ENCODE measurements at regions of chr19 and their contacts with region 1.

Region 1: GRCh38 chr19:46016426-46017094 is 6.3 kb downstream of the PGLYRP1 start:
- DNase-seq: peak; percentile 59 to 90 (median 83)
- ATAC-seq: peak; percentile 77
- H3K4me3 ChIP-seq: peak overlapping the region; percentile 93
- H3K4me3 Mint-ChIP-seq: peak overlapping the region; percentile 87
- H3K27ac ChIP-seq: peak overlapping the region; percentile 0 to 25
- H3K27ac Mint-ChIP-seq: peak overlapping the region; percentile 28
- H3K4me1 ChIP-seq: peaks cover 12% of the 10 kb centered on the region
- H3K4me1 Mint-ChIP-seq: peaks cover 17% of the 10 kb centered on the region
- H3K27me3 ChIP-seq: peaks cover 0 to 3% of the 10 kb centered on the region in 2 experiments
- H3K27me3 Mint-ChIP-seq: peaks cover 11% of the 10 kb centered on the region
- CTCF ChIP-seq: peak; percentile 84

Region 2: DNA sequence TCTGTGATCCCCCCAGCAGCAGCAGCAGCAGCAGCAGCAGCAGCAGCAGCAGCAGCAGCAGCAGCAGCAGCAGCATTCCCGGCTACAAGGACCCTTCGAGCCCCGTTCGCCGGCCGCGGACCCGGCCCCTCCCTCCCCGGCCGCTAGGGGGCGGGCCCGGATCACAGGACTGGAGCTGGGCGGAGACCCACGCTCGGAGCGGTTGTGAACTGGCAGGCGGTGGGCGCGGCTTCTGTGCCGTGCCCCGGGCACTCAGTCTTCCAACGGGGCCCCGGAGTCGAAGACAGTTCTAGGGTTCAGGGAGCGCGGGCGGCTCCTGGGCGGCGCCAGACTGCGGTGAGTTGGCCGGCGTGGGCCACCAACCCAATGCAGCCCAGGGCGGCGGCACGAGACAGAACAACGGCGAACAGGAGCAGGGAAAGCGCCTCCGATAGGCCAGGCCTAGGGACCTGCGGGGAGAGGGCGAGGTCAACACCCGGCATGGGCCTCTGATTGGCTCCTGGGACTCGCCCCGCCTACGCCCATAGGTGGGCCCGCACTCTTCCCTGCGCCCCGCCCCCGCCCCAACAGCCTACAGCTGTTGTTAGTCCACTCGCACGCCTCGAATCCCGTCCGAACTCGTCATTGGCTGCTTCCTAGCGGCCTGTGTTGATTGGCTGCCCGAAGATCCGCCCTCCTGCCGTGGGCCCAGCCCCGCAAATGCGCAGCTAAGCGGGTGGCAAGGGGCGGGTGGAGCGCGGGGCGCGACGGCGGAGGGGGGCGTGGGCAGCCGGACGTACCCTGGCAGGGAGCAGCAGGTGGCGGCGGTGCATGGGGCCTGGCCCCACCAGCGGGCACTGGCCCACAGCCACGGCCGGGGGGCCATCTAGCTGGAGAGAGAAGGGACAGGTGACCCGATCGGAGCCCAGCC is 246.1 kb before region 1 on chr19:
- CTCF ChIA-PET with region 1: interaction called, 5 read pairs
- POLR2A ChIA-PET with region 1: interaction called, 7 read pairs
- intact Hi-C with region 1: loop called in 1 of 2 experiments (anchors 1 kb)
- DNase-seq: peak; percentile 79 to 94 (median 92)
- ATAC-seq: peak; percentile 74
- H3K4me3 ChIP-seq: peak overlapping the region; percentile 90 to 99
- H3K4me3 Mint-ChIP-seq: peak overlapping the region; percentile 84
- H3K27ac ChIP-seq: peak overlapping the region in 1 of 2 experiments; percentile 77
- H3K27ac Mint-ChIP-seq: peak overlapping the region; percentile 85
- H3K4me1 ChIP-seq: peaks cover 22% of the 10 kb centered on the region
- H3K4me1 Mint-ChIP-seq: peaks cover 24% of the 10 kb centered on the region
- H3K27me3 ChIP-seq: peaks cover 0 to 6% of the 10 kb centered on the region in 2 experiments
- H3K27me3 Mint-ChIP-seq: peaks cover 7% of the 10 kb centered on the region
- CTCF ChIP-seq: peak; percentile 99

Region 3: GRCh38 chr19:45902651-45903625 is 113.6 kb before region 1 on chr19:
- CTCF ChIA-PET with region 1: no interaction called
- POLR2A ChIA-PET with region 1: no interaction called
- intact Hi-C with region 1: loop called in 1 of 2 experiments (anchors 1 kb)
- DNase-seq: peak; percentile 98 to 100 (median 99)
- ATAC-seq: peak; percentile 82
- H3K4me3 ChIP-seq: peak overlapping the region; percentile 76 to 83
- H3K4me3 Mint-ChIP-seq: peak overlapping the region; percentile 92
- H3K27ac ChIP-seq: peak overlapping the region; percentile 64 to 77
- H3K27ac Mint-ChIP-seq: peak overlapping the region; percentile 72
- H3K4me1 ChIP-seq: peaks cover 17% of the 10 kb centered on the region
- H3K4me1 Mint-ChIP-seq: peaks cover 26% of the 10 kb centered on the region
- H3K27me3 ChIP-seq: no peaks in the 10 kb centered on the region
- H3K27me3 Mint-ChIP-seq: no peaks in the 10 kb centered on the region
- CTCF ChIP-seq: no peak

Region 4: GRCh38 chr19:45960595-45961235 is 55.8 kb before region 1 on chr19:
- CTCF ChIA-PET with region 1: no interaction called
- POLR2A ChIA-PET with region 1: no interaction called
- intact Hi-C with region 1: no loop called
- DNase-seq: no peak
- ATAC-seq: no peak
- H3K4me3 ChIP-seq: no peak overlapping the region
- H3K4me3 Mint-ChIP-seq: no peak overlapping the region
- H3K27ac ChIP-seq: no peak overlapping the region
- H3K27ac Mint-ChIP-seq: no peak overlapping the region
- H3K4me1 ChIP-seq: no peaks in the 10 kb centered on the region
- H3K4me1 Mint-ChIP-seq: no peaks in the 10 kb centered on the region
- H3K27me3 ChIP-seq: peaks cover 5 to 15% of the 10 kb centered on the region in 2 experiments
- H3K27me3 Mint-ChIP-seq: peaks cover 55% of the 10 kb centered on the region
- CTCF ChIP-seq: no peak

Region 5: GRCh38 chr19:45994989-45995714 is 21.4 kb before region 1 on chr19 and contains the start of gene CCDC61:
- CTCF ChIA-PET with region 1: interaction called, 10 read pairs
- POLR2A ChIA-PET with region 1: interaction called, 5 read pairs
- intact Hi-C with region 1: loop called (anchors 1 kb)
- DNase-seq: peak; percentile 92 to 99 (median 95)
- ATAC-seq: peak; percentile 95
- H3K4me3 ChIP-seq: peak within 1 kb of the TSS; percentile 73 to 77
- H3K4me3 Mint-ChIP-seq: no peak within 1 kb of the TSS
- H3K27ac ChIP-seq: peak within 1 kb of the TSS; percentile 64 to 74
- H3K27ac Mint-ChIP-seq: no peak within 1 kb of the TSS
- H3K4me1 ChIP-seq: peaks cover 16% of the 10 kb centered on the region
- H3K4me1 Mint-ChIP-seq: peaks cover 25% of the 10 kb centered on the region
- H3K27me3 ChIP-seq: no peaks in the 10 kb centered on the region
- H3K27me3 Mint-ChIP-seq: peaks cover 7% of the 10 kb centered on the region
- CTCF ChIP-seq: no peak
- total RNA-seq, gene CCDC61: 4.9 to 6.2 TPM

Region 6: GRCh38 chr19:46030812-46031550 is 14.4 kb after region 1 on chr19:
- CTCF ChIA-PET with region 1: interaction called, 22 read pairs
- POLR2A ChIA-PET with region 1: no interaction called
- intact Hi-C with region 1: no loop called
- DNase-seq: no peak
- ATAC-seq: no peak
- H3K4me3 ChIP-seq: no peak overlapping the region
- H3K4me3 Mint-ChIP-seq: no peak overlapping the region
- H3K27ac ChIP-seq: no peak overlapping the region
- H3K27ac Mint-ChIP-seq: no peak overlapping the region
- H3K4me1 ChIP-seq: peaks cover 4% of the 10 kb centered on the region
- H3K4me1 Mint-ChIP-seq: peaks cover 12% of the 10 kb centered on the region
- H3K27me3 ChIP-seq: peaks cover 0 to 6% of the 10 kb centered on the region in 2 experiments
- H3K27me3 Mint-ChIP-seq: peaks cover 24% of the 10 kb centered on the region
- CTCF ChIP-seq: no peak

Region 7: GRCh38 chr19:46065553-46065952 is 49.0 kb after region 1 on chr19:
- CTCF ChIA-PET with region 1: no interaction called
- POLR2A ChIA-PET with region 1: no interaction called
- intact Hi-C with region 1: no loop called
- DNase-seq: no peak
- ATAC-seq: no peak
- H3K4me3 ChIP-seq: no peak overlapping the region
- H3K4me3 Mint-ChIP-seq: no peak overlapping the region
- H3K27ac ChIP-seq: no peak overlapping the region
- H3K27ac Mint-ChIP-seq: no peak overlapping the region
- H3K4me1 ChIP-seq: no peaks in the 10 kb centered on the region
- H3K4me1 Mint-ChIP-seq: no peaks in the 10 kb centered on the region
- H3K27me3 ChIP-seq: no peaks in the 10 kb centered on the region
- H3K27me3 Mint-ChIP-seq: peaks cover 67% of the 10 kb centered on the region
- CTCF ChIP-seq: no peak